ENCODE measurements at regions of chr20 and their contacts with region 1.

Region 1: DNA sequence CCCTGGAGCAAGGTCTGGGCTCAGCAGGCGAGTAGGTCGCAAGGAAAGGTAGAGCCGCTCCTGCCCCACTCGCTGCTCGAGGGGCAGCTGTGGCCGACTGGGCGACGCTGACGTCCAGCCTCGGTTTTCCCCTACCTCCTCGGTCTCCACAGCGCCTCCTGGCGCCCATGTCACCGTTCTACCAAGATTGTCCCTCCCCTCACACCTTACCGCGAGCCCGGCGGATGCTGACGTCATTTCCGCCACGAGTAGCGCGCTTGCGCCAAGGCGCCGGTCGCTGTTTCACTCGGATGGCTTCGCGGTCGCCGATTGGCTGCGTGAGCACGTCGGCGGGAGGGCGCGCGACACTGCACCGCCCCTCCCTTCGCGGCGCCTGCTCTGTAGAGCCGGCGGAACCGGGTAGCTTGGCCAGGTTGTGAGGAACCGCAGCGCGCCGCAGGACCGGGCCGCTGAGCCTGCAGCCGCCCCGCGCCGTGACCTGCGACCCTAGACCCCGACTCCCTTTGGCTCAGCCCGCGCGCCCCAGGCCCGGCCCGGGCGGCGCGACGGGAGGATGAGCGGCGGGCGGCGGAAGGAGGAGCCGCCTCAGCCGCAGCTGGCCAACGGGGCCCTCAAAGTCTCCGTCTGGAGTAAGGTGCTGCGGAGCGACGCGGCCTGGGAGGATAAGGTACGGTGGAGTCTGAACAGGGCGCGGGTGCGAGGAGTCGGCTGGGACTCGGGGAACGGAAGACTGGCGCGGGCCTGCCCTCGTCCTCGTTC is at the start of gene RAB5IF:
- DNase-seq: peak; percentile 98 to 100 (median 99)
- ATAC-seq: peak; percentile 91
- H3K4me3 ChIP-seq: peak within 1 kb of the TSS; percentile 78 to 100
- H3K4me3 Mint-ChIP-seq: peak within 1 kb of the TSS; percentile 97
- H3K27ac ChIP-seq: peak within 1 kb of the TSS; percentile 89 to 96
- H3K27ac Mint-ChIP-seq: peak within 1 kb of the TSS; percentile 97
- H3K4me1 ChIP-seq: peaks cover 26% of the 10 kb centered on the region
- H3K4me1 Mint-ChIP-seq: peaks cover 28% of the 10 kb centered on the region
- H3K27me3 ChIP-seq: no peaks in the 10 kb centered on the region
- H3K27me3 Mint-ChIP-seq: no peaks in the 10 kb centered on the region
- CTCF ChIP-seq: peak; percentile 80
- total RNA-seq, gene RAB5IF: 106 to 108 TPM

Region 2: GRCh38 chr20:36199345-36200257 is 406.0 kb before region 1 on chr20:
- CTCF ChIA-PET with region 1: no interaction called
- POLR2A ChIA-PET with region 1: no interaction called
- intact Hi-C with region 1: loop called in 1 of 2 experiments (anchors 10 kb)
- DNase-seq: peak; percentile 53 to 79 (median 74)
- ATAC-seq: peak; percentile 82
- H3K4me3 ChIP-seq: no peak overlapping the region
- H3K4me3 Mint-ChIP-seq: no peak overlapping the region
- H3K27ac ChIP-seq: no peak overlapping the region
- H3K27ac Mint-ChIP-seq: no peak overlapping the region
- H3K4me1 ChIP-seq: no peaks in the 10 kb centered on the region
- H3K4me1 Mint-ChIP-seq: peaks cover 8% of the 10 kb centered on the region
- H3K27me3 ChIP-seq: no peaks in the 10 kb centered on the region
- H3K27me3 Mint-ChIP-seq: peaks cover 7% of the 10 kb centered on the region
- CTCF ChIP-seq: peak; percentile 82

Region 3: DNA sequence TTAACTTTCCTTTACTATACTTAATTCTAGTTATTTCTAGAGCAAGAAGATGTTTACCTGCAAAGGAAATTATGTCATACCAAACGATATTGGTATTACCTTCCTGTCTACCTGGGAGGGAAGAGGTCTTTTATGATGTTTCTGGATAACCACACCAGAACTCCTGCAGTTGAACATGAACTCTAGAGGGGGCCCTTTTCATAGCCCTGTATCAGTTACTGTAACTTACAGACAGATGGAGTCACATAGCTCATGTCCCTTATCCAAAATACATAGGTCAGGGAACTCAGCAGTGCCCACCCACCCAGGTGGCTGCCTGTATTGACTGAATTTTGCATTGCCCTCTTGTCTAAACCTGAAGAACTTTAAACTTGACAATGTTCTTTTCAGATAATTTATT is 99.3 kb before region 1 on chr20:
- CTCF ChIA-PET with region 1: interaction called, 6 read pairs
- POLR2A ChIA-PET with region 1: interaction called, 3 read pairs
- intact Hi-C with region 1: loop called (anchors 1 kb)
- DNase-seq: peak in 2 of 9 experiments; percentile 36 to 59
- ATAC-seq: peak; percentile 80
- H3K4me3 ChIP-seq: no peak overlapping the region
- H3K4me3 Mint-ChIP-seq: no peak overlapping the region
- H3K27ac ChIP-seq: no peak overlapping the region
- H3K27ac Mint-ChIP-seq: no peak overlapping the region
- H3K4me1 ChIP-seq: no peaks in the 10 kb centered on the region
- H3K4me1 Mint-ChIP-seq: peaks cover 8% of the 10 kb centered on the region
- H3K27me3 ChIP-seq: no peaks in the 10 kb centered on the region
- H3K27me3 Mint-ChIP-seq: no peaks in the 10 kb centered on the region
- CTCF ChIP-seq: peak; percentile 51

Region 4: DNA sequence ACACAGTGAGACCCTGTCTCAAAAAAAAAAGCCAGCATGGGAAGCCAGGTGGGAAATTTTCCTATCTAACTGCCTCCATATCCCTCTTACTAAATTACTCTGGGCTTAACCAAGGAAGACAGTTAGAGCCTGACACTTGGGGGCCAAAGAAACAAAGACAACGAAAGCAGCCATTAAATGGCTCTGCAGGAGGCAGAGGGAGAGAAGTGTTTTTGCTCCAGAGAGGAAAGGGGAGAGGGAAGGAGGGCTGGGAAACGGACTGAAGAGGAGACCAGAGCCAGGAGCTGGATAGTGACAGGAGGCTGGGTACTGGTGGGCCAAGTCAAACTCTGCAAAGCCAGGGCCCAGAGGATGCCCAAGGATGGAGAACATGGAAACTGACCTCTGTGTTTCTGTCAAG is 42.9 kb before region 1 on chr20:
- CTCF ChIA-PET with region 1: interaction called, 17 read pairs
- POLR2A ChIA-PET with region 1: interaction called, 4 read pairs
- intact Hi-C with region 1: no loop called
- DNase-seq: no peak
- ATAC-seq: no peak
- H3K4me3 ChIP-seq: no peak overlapping the region
- H3K4me3 Mint-ChIP-seq: no peak overlapping the region
- H3K27ac ChIP-seq: no peak overlapping the region
- H3K27ac Mint-ChIP-seq: no peak overlapping the region
- H3K4me1 ChIP-seq: no peaks in the 10 kb centered on the region
- H3K4me1 Mint-ChIP-seq: peaks cover 17% of the 10 kb centered on the region
- H3K27me3 ChIP-seq: no peaks in the 10 kb centered on the region
- H3K27me3 Mint-ChIP-seq: no peaks in the 10 kb centered on the region
- CTCF ChIP-seq: no peak

Region 5: GRCh38 chr20:36591854-36592641 is 13.5 kb before region 1 on chr20:
- CTCF ChIA-PET with region 1: interaction called, 43 read pairs
- POLR2A ChIA-PET with region 1: interaction called, 45 read pairs
- intact Hi-C with region 1: loop called (anchors 1 kb)
- DNase-seq: peak in 5 of 9 experiments; percentile 54 to 81 (median 74)
- ATAC-seq: peak; percentile 55
- H3K4me3 ChIP-seq: no peak overlapping the region
- H3K4me3 Mint-ChIP-seq: no peak overlapping the region
- H3K27ac ChIP-seq: peak overlapping the region in 1 of 2 experiments; percentile 49
- H3K27ac Mint-ChIP-seq: peak overlapping the region; percentile 71
- H3K4me1 ChIP-seq: peaks cover 38% of the 10 kb centered on the region
- H3K4me1 Mint-ChIP-seq: peaks cover 53% of the 10 kb centered on the region
- H3K27me3 ChIP-seq: no peaks in the 10 kb centered on the region
- H3K27me3 Mint-ChIP-seq: no peaks in the 10 kb centered on the region
- CTCF ChIP-seq: no peak

Region 6: GRCh38 chr20:36645998-36646397 is 40.4 kb after region 1 on chr20 and contains the start of gene SLA2:
- CTCF ChIA-PET with region 1: interaction called, 56 read pairs
- POLR2A ChIA-PET with region 1: interaction called, 23 read pairs
- intact Hi-C with region 1: loop called in 1 of 2 experiments (anchors 2 kb)
- DNase-seq: peak; percentile 49 to 91 (median 76)
- ATAC-seq: peak; percentile 73
- H3K4me3 ChIP-seq: peak within 1 kb of the TSS; percentile 77 to 79
- H3K4me3 Mint-ChIP-seq: peak within 1 kb of the TSS; percentile 98
- H3K27ac ChIP-seq: peak within 1 kb of the TSS; percentile 77 to 84
- H3K27ac Mint-ChIP-seq: peak within 1 kb of the TSS; percentile 98
- H3K4me1 ChIP-seq: peaks cover 41% of the 10 kb centered on the region
- H3K4me1 Mint-ChIP-seq: peaks cover 58% of the 10 kb centered on the region
- H3K27me3 ChIP-seq: no peaks in the 10 kb centered on the region
- H3K27me3 Mint-ChIP-seq: no peaks in the 10 kb centered on the region
- CTCF ChIP-seq: no peak
- total RNA-seq, gene SLA2: 58.5 to 60.3 TPM

Region 7: GRCh38 chr20:36773597-36774390 is 168.2 kb after region 1 on chr20 and contains the start of gene DSN1:
- CTCF ChIA-PET with region 1: interaction called, 3 read pairs
- POLR2A ChIA-PET with region 1: interaction called, 3 read pairs
- intact Hi-C with region 1: loop called in 1 of 2 experiments (anchors 2 kb)
- DNase-seq: peak; percentile 94 to 99 (median 98)
- ATAC-seq: peak; percentile 82
- H3K4me3 ChIP-seq: peak within 1 kb of the TSS; percentile 74 to 80
- H3K4me3 Mint-ChIP-seq: peak within 1 kb of the TSS; percentile 99
- H3K27ac ChIP-seq: peak within 1 kb of the TSS; percentile 66 to 92
- H3K27ac Mint-ChIP-seq: peak within 1 kb of the TSS; percentile 95
- H3K4me1 ChIP-seq: peaks cover 8% of the 10 kb centered on the region
- H3K4me1 Mint-ChIP-seq: peaks cover 11% of the 10 kb centered on the region
- H3K27me3 ChIP-seq: no peaks in the 10 kb centered on the region
- H3K27me3 Mint-ChIP-seq: no peaks in the 10 kb centered on the region
- CTCF ChIP-seq: no peak
- total RNA-seq, gene DSN1: 12.2 to 13.1 TPM

Region 8: DNA sequence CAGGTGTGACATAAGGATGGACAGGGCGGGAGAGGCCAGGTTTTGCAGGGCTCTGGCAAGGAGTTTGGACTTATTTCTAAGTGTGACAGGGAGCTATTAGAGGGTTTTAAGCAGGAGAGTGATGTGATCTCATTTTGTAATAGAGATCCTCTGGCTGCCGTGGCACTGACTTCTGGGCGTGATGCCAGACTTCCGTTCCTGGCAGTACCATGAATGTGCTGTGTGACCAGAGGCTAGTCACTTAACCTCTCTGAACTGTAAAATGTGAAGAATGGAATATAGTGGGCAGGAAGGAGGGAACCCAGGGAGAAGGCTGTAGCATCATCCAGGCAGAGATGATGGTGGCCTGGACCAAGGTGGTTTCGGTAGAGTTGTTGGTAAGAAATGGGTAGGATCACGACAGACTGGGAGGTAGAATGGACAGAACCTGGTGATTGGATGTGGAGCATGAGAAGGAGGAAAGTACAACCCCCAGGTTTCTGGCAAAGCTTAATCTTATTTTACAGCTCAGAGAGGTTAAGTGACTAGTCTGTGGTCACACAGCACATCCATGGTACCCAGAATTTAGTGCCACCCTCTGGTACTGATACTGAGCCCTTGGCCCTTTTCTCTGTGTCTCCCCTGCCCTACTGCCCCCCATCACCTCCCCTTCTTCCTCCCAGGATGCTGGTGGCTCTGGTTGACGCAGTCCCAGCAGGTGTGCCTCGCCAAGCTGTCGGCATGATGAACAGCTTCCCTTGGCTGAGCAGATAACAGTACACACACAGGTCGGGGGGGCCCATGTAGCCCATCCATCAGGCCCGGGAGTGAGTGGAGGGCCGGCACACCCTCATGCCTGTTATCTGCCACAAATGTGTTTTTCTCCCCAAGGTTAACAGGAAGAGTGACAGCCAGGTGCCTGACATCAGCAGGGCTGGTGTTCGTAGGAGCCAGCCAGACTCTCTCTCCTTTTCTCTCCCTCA is 1035.3 kb after region 1 on chr20:
- CTCF ChIA-PET with region 1: no interaction called
- POLR2A ChIA-PET with region 1: no interaction called
- intact Hi-C with region 1: no loop called
- DNase-seq: no peak
- ATAC-seq: no peak
- H3K4me3 ChIP-seq: no peak overlapping the region
- H3K4me3 Mint-ChIP-seq: no peak overlapping the region
- H3K27ac ChIP-seq: no peak overlapping the region
- H3K27ac Mint-ChIP-seq: no peak overlapping the region
- H3K4me1 ChIP-seq: no peaks in the 10 kb centered on the region
- H3K4me1 Mint-ChIP-seq: no peaks in the 10 kb centered on the region
- H3K27me3 ChIP-seq: peaks cover 0 to 2% of the 10 kb centered on the region in 2 experiments
- H3K27me3 Mint-ChIP-seq: peaks cover 52% of the 10 kb centered on the region
- CTCF ChIP-seq: no peak

Measured in CD8-positive, alpha-beta T cell (primary cell).